Naive thymus-derived CD4-positive, alpha-beta T cell (primary cell): ENCODE measurements at regions of chr2 and their contacts with region 1.

Region 1: DNA sequence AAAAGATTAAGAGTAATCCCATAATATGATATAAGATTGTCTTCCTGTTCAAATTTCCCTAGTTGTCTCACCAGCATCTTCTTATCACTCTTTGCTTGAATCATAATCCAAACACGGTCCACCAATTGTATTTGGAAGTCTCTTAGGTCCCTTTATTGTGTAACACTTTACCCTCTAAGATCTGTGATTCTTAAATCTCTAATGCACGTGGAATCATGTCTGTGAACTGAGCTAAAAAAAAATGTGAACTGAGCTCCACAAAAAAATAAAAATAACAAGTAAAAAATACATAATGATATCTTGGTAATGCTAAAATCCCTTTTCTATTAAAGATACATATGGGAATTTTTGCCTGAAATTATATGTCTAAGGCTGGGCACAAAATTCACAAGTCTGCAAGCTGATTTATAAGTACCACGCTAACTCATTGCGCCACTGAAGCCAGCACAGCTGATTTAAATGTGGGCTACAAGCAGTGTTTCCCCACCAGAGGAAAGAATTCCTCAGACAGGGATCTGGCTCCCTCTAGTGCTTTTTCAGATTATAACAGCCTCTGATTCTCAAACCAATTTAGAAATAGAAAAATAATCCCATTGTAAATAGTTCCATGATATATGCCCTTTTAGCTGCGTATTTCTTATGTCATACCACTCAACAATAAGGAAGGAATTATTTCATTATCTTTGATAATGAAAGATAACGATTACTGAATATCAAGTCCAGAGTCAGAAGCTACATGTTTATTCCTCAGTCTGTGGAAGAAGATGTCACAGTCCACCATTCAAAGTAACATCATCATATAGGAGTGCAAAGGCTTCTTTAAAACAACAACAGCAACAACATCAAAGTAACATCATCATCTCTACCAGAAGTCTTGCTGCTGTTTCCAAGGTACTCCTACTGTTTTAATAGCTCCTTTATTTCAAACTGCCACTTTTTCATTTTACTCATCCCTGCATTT is 22.9 kb downstream of the RBM43 start:
- DNase-seq: peak in 6 of 9 donors; percentile 28 to 55 (median 46)
- ATAC-seq: peak; percentile 81
- H3K4me3 ChIP-seq: no peak overlapping the region
- H3K4me3 Mint-ChIP-seq: no peak overlapping the region
- H3K27ac ChIP-seq: no peak overlapping the region
- H3K27ac Mint-ChIP-seq: peak overlapping the region in 1 of 9 donors; percentile 32
- H3K4me1 ChIP-seq: no peaks in the 10 kb centered on the region
- H3K4me1 Mint-ChIP-seq: no peaks in the 10 kb centered on the region
- H3K27me3 ChIP-seq: no peaks in the 10 kb centered on the region
- H3K27me3 Mint-ChIP-seq: peaks cover 0 to 13% (median 0%) of the 10 kb centered on the region in 5 donors

Region 2: DNA sequence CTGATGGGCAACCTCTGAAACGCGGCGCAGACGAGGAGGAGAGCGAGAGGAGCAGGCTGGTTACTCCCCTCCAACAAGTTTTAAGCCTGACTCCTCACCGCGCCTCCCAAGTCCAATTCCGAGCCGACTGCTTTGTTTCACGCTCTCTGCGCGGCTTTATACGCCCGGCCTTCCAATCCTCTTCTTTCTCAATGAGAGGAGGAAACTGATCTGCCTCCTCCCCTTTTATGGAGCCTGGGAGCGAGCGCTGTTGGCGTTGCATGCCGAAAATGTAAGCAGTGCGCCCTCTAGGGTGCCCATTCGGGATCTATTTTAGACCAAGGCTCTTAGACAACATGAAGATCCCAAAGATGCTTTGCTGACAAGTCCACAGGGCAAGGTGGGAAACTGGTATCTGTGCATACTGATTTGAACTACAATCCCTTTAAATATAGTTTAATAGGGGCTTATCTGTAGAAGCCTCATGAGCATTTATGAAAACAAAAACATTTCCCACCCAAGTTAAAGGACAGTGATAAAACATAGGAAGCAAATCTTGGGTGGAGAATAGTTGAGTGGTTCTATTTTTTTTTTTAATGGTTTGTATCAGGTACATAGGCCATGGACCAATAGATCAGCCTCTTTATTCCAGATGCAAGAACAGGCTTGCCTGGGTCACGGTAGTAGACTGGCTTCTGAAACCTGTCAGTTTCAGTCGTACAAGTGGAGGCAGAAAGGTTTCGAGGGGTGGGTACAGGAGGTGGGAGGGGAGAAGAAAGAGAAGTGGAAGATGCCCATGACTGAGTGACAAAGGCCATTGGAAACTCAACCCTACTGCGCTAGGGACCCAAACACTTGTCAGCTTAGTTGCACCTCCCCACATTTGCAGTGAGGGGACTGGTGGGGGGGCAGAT is 751.0 kb before region 1 on chr2 and contains the start of gene RND3:
- CTCF ChIA-PET with region 1: no interaction called
- POLR2A ChIA-PET with region 1: no interaction called
- intact Hi-C with region 1: loop called in 1 of 2 experiments (anchors 5 kb)
- DNase-seq: peak in 3 of 9 donors; percentile 2 to 45 (median 14)
- ATAC-seq: no peak
- H3K4me3 ChIP-seq: no peak within 1 kb of the TSS
- H3K4me3 Mint-ChIP-seq: peak within 1 kb of the TSS in 9 of 10 donors; percentile 47 to 85 (median 73)
- H3K27ac ChIP-seq: no peak within 1 kb of the TSS
- H3K27ac Mint-ChIP-seq: no peak within 1 kb of the TSS
- H3K4me1 ChIP-seq: no peaks in the 10 kb centered on the region
- H3K4me1 Mint-ChIP-seq: peaks cover 5 to 19% (median 15%) of the 10 kb centered on the region in 7 donors
- H3K27me3 ChIP-seq: peaks cover 0 to 3% of the 10 kb centered on the region in 2 donors
- H3K27me3 Mint-ChIP-seq: peaks cover 56 to 67% (median 59%) of the 10 kb centered on the region in 5 donors
- total RNA-seq, gene RND3: not detected

Region 3: GRCh38 chr2:151051574-151052220 is 187.1 kb before region 1 on chr2:
- CTCF ChIA-PET with region 1: no interaction called
- POLR2A ChIA-PET with region 1: no interaction called
- intact Hi-C with region 1: loop called in 1 of 2 experiments (anchors 2 kb)
- DNase-seq: peak in 6 of 9 donors; percentile 1 to 47 (median 29)
- ATAC-seq: peak; percentile 64
- H3K4me3 ChIP-seq: no peak overlapping the region
- H3K4me3 Mint-ChIP-seq: no peak overlapping the region
- H3K27ac ChIP-seq: no peak overlapping the region
- H3K27ac Mint-ChIP-seq: no peak overlapping the region
- H3K4me1 ChIP-seq: no peaks in the 10 kb centered on the region
- H3K4me1 Mint-ChIP-seq: peaks cover 0 to 5% (median 0%) of the 10 kb centered on the region in 7 donors
- H3K27me3 ChIP-seq: no peaks in the 10 kb centered on the region
- H3K27me3 Mint-ChIP-seq: peaks cover 0 to 11% (median 8%) of the 10 kb centered on the region in 5 donors